GM23248 (cell line): ENCODE measurements at regions of chr9 and their contacts with region 1.

Region 1: DNA sequence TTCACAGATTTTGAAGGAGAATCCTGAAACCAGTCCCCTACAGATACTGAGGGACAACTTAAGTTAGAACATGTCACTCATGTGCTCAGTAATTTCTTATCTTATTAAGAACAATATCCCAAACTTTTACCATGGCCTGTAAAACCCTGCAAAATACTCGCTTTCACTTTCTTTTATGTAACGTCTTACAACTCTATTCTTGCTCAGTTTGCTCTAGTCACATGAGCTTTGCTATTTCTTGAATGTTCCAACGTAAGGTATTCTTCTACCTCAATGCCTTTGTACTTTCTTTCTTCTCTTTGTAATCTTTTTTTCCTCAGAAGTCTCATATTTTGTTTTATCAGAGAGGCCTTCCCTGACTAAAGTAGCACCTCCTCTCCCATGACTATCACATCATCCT is 14.1 kb downstream of the TMEM38B start:
- DNase-seq: no peak
- H3K4me3 ChIP-seq: no peak overlapping the region
- H3K27ac ChIP-seq: no peak overlapping the region
- H3K4me1 ChIP-seq: no peaks in the 10 kb centered on the region
- H3K27me3 ChIP-seq: no peaks in the 10 kb centered on the region

Region 2: DNA sequence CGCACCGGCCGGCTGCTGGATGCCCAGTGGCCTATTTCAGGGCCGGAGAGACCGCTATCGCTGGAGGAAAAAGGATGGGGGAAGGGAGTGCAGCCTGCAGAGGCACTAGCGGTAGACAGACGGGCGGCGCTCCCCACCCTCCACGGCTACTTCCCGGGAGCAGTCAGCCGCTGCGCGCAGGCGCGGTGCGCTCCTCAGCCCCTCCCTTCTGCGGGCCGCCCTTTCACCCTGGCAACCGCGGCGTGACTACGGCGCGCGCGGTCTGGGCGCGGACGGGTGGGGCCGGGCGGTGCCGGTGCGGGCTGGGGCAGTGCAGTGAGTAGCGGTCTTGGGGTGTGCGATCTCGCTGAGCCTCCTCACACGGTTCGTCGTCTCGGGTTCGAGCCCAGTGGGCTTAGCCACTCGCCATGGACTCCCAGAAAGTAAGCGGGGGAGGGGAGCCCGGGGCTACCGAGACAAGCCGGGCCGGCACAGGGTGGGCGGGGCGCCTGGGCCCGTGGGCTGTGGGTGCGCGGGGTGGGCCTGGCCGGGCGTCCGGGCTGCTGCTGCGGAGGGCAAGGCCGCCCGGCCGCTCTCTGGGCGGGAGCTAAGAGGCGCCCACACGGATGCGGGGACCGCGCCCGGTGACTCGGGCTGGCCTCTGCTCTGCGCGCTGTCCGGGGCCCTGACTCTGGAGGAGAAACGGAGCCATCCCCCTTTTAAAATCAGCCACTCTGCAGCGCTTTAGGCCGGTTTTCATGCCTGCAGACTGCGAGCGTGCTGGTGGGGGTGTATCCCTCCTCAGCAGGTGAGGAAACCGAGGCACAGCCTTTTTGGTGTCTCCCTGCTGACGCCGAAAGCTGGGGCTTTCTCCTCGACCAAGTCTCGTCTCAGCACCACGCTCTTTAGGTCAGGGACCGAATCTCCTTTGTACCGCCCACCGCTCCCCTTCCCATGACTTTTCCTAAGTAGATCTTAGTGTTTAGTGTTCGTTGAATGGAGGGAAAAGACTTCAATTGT is 260.3 kb before region 1 on chr9 and contains the start of gene FSD1L:
- in situ Hi-C with region 1: loop called (anchors 25 kb)
- DNase-seq: peak; percentile 97
- H3K4me3 ChIP-seq: peak within 1 kb of the TSS; percentile 97
- H3K27ac ChIP-seq: peak within 1 kb of the TSS; percentile 80
- H3K4me1 ChIP-seq: peaks cover 31% of the 10 kb centered on the region
- H3K27me3 ChIP-seq: no peaks in the 10 kb centered on the region
- total RNA-seq, gene FSD1L: 1.3 and 2.7 TPM in 2 replicates

Region 3: DNA sequence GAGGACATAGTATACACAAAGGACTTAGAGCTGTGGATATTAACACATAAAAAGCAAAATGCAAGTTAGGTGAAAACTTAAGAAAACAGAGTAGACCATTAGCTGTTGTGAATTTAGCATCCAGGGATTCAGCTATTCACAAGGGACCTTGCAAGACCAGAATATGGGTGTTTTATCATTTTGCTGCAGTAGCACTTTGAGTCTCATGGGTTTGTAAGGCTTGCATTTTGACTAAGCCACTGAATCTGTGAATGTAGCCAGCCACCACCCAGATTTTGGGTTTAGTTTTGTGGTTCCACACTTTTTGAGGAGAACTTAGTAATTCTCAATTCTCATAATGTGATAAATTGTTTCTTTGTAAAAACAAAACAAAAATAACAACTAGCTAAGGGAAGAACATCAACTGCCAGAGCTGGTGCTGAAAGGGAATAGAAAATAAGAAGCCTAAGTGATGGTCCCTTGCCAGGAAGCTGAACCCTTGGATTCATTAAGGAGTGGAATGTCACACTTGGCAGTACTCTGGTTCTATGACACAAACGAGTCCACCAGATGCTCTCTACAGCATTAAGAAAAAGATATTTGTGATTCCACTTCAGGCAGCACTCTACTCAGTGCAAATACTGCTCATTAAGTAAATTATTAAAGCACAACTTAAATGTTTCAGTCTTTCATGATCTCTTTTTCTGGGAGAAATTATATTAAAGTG is 597.2 kb after region 1 on chr9:
- in situ Hi-C with region 1: no loop called
- DNase-seq: no peak
- H3K4me3 ChIP-seq: no peak overlapping the region
- H3K27ac ChIP-seq: no peak overlapping the region
- H3K4me1 ChIP-seq: no peaks in the 10 kb centered on the region
- H3K27me3 ChIP-seq: no peaks in the 10 kb centered on the region